ENCODE measurements at regions of chr12 and their contacts with region 1.

Region 1: GRCh38 chr12:62435303-62436163 is 31.1 kb upstream of the MON2 start:
- DNase-seq: peak; percentile 49
- H3K4me3 ChIP-seq: peak overlapping the region; percentile 61
- H3K27ac ChIP-seq: no peak overlapping the region
- H3K27me3 ChIP-seq: peaks cover 26% of the 10 kb centered on the region
- CTCF ChIP-seq: peak; percentile 75

Region 2: DNA sequence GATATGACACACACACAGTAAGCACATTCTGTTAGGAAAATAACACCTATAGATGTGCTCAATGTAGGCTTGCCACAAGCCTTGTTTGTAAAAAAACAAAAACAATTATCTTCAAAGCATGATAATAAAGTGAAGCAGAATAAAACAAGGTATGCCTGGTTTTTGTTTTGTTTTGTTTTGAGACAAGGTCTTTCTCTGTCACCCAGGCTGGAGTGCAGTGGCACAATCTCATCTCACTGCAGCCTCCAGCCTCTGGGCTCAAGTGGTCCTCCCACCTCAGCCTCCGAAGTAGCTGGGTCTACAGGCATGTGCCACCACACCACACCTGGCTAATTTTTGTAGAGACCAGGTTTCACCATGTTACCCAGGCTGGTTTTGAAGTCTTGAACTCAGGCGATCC is 21.4 kb before region 1 on chr12:
- CTCF ChIA-PET with region 1: interaction called, 63 read pairs
- POLR2A ChIA-PET with region 1: no interaction called
- DNase-seq: no peak
- H3K4me3 ChIP-seq: no peak overlapping the region
- H3K27ac ChIP-seq: no peak overlapping the region
- H3K27me3 ChIP-seq: no peaks in the 10 kb centered on the region
- CTCF ChIP-seq: no peak

Region 3: DNA sequence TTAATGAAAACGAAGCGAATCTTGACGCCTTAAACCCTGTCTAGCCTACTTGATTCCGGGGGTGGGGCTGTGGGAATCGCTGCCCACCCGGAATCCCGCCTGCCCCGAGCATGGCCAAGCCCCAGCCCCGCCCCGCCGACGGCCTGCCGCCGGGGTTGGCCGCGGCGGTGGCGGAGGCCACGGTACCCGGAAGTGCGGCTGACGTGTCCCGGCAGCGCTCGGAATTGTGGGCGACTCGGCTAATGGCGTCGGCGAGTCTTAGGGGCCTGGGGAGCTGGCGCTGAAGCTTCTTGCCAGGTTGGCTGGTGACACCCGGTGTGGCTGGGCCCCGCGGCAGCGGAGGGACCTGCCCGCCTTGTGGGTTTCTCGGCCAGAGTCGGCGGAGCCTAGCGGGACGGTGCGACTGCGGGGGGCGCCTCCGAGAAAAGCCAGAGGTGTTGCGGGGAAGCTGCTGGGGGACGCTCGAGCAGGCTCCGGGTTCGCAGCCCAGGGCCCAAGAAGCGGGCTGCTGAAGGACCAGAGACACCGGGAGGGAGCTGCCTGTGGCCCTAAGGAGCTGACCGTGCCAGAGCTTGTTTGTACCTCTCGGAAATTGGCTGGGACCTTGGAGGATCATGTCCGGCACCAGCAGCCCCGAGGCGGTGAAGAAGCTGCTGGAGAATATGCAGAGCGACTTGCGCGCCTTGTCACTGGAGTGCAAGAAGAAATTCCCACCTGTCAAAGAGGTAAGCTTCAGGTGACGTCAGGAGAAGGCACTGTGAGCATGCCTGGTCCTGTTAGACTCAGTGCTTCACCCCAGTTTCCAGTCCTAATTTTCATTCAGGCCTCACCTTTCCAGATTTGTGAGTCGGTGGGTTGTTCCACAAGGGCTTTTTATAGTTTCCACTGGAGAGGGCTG is 31.3 kb after region 1 on chr12 and contains the start of gene MON2:
- CTCF ChIA-PET with region 1: interaction called, 27 read pairs
- POLR2A ChIA-PET with region 1: interaction called, 4 read pairs
- DNase-seq: peak; percentile 29
- H3K4me3 ChIP-seq: peak within 1 kb of the TSS; percentile 99
- H3K27ac ChIP-seq: peak within 1 kb of the TSS; percentile 86
- H3K27me3 ChIP-seq: no peaks in the 10 kb centered on the region
- CTCF ChIP-seq: no peak
- polyA plus RNA-seq, gene MON2: 24.2 and 25.4 TPM in 2 replicates

Region 4: DNA sequence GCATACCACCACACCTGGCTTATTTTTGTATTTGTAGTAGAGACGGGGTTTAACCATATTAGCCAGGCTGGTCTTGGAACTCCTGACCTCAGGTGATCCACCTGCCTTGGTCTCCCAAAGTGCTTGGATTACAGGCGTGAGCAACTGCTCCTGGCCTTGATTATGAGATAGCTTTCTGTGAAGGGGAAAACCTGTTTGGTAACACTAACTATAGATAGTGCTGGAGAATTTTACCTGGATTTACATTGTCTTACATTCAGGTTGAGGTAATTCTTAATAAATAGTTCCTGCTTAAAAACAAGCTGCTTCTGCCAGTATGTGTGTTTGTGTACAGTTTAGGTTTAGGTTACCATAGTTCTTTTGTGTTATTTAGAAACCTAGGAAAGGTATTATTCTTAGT is 108.2 kb after region 1 on chr12:
- CTCF ChIA-PET with region 1: interaction called, 13 read pairs
- POLR2A ChIA-PET with region 1: no interaction called
- DNase-seq: no peak
- H3K4me3 ChIP-seq: no peak overlapping the region
- H3K27ac ChIP-seq: no peak overlapping the region
- H3K27me3 ChIP-seq: no peaks in the 10 kb centered on the region
- CTCF ChIP-seq: no peak

Region 5: DNA sequence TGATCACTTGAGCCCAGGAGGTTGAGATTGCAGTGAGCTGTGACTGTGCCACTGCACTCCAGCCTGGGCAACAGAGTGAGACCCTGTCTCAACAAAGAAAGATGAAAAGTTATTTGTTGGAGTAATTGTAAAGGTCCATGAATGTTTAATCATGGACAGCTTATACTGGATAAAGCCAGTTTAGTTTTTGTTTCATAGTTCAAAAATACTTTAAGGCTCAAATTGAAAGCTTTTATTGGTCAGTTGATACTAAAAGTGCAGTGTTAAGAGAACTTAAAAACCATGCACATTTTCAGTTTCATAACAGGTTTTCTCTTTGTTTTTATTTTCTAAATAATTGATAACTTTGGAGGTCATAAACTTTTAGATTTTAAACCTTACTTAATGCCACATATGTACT is 139.5 kb after region 1 on chr12:
- CTCF ChIA-PET with region 1: interaction called, 11 read pairs
- POLR2A ChIA-PET with region 1: interaction called, 3 read pairs
- DNase-seq: no peak
- H3K4me3 ChIP-seq: no peak overlapping the region
- H3K27ac ChIP-seq: no peak overlapping the region
- H3K27me3 ChIP-seq: no peaks in the 10 kb centered on the region
- CTCF ChIP-seq: no peak

Region 6: DNA sequence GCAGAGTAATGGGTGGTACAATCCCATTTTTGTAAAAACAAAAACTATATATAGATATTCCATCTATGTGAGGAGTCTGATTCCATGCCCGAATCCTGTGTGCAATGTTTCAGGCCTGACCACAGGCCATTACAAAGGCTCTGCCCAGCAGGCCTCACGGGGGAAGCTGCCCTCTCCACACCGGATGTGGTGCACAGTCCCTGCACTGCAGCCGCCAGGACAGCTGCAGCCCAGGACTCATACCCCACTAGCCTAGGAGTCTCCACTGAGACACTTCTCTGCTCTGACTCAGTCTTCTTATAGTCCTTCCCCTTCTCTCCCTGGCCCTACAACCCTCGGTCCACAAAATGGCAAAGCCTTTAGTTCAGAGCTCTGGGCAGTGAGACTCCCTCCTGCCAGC is 309.0 kb after region 1 on chr12:
- CTCF ChIA-PET with region 1: no interaction called
- POLR2A ChIA-PET with region 1: no interaction called
- DNase-seq: no peak
- H3K4me3 ChIP-seq: no peak overlapping the region
- H3K27ac ChIP-seq: no peak overlapping the region
- H3K27me3 ChIP-seq: no peaks in the 10 kb centered on the region
- CTCF ChIP-seq: no peak

Region 7: DNA sequence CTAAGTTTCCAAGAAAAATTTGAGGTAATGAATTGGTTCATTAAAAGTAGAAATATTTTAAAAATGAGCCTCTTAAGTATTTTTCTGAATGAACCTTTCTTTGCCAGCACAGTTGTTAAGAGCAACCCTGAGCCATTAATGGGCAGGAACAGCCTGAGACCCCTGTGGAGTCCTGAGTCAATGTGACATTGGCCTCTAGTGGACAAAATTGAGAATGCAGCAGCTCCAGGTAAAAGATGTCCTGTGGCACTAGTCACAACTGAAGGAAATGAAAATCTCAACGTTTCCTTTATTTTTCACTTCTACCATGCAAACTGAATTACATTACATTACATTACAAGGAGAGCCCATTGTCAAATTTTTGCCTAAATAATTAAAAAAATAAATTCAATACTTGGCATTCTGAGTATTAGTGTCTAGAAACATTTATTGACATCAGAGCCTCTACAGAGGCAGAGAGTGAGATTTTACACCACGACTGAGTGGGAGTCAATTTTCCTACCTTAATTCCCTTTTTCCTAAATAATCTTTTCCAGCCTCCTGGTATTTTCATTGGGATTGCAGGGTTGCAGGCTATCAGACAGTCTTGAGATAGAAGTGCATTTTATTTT is 363.7 kb after region 1 on chr12:
- CTCF ChIA-PET with region 1: interaction called, 128 read pairs
- POLR2A ChIA-PET with region 1: no interaction called
- DNase-seq: peak; percentile 43
- H3K4me3 ChIP-seq: no peak overlapping the region
- H3K27ac ChIP-seq: no peak overlapping the region
- H3K27me3 ChIP-seq: peaks cover 2% of the 10 kb centered on the region
- CTCF ChIP-seq: peak; percentile 98

Region 8: DNA sequence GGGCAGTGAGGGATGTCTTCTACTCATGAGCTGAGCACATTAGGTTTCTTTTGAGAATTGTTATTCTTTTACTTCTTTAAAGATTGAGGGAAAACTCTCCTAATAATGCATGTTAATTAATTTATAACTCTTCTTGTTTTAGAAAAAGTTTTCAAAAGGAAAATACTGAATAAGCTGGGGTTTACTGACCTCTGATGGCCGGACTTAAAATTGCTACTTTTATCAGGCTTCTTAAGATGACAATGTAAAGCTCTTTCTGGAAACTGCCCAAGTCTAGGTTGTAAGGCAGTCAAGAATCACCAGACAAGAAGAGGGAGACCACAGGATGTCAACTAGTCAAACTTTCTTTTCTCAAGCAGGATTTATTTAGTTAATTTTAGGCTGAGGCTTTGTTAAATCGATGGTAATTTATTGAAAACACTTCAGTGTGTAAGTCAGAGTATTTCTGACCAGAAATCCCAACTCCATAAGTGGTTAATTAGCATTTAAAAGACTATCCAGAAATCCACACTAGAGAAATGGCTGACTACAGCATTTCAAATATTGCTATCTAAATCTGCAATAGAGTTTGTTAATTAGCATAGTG is 633.4 kb after region 1 on chr12:
- CTCF ChIA-PET with region 1: interaction called, 19 read pairs
- POLR2A ChIA-PET with region 1: no interaction called
- DNase-seq: peak; percentile 34
- H3K4me3 ChIP-seq: no peak overlapping the region
- H3K27ac ChIP-seq: no peak overlapping the region
- H3K27me3 ChIP-seq: no peaks in the 10 kb centered on the region
- CTCF ChIP-seq: peak; percentile 64

Measured in AG04450 (cell line).